ENCODE measurements at regions of chr14 and their contacts with region 1.

Region 1: DNA sequence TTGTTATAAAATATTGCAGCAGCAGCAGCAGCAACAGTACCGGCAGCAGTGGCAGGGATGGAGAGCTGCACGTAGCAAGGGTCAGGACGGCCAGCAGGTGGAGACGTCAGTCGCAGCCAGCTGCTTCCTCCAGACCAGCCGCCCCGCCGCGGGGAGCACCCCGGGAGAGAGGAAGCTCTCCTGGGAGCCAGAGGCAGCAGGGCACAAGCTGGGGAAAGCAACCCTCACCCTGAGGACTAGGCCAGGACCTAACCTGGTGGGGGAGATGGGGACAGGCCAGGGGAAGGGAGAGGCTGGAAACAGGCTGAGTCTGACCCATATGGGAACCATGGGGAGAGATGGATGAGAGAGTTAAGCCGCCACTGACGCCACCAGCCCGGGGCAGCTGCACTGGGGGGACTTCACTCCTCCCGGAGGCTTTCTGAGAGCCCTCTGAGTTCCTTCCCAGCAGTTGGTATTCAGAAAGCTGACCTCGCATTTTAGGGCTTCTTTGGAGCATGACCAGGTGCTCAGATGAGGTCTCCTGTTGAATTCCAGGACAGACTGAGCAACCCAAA is 56.3 kb downstream of the SPTB start:
- DNase-seq: peak; percentile 65
- H3K4me3 Mint-ChIP-seq: no peak overlapping the region
- H3K27ac Mint-ChIP-seq: no peak overlapping the region
- H3K4me1 Mint-ChIP-seq: peaks cover 17% of the 10 kb centered on the region
- H3K27me3 Mint-ChIP-seq: peaks cover 24% of the 10 kb centered on the region
- CTCF ChIP-seq: peak; percentile 68

Region 2: GRCh38 chr14:64800000-64800399 is 23.4 kb before region 1 on chr14:
- CTCF ChIA-PET with region 1: interaction called, 23 read pairs
- POLR2A ChIA-PET with region 1: no interaction called
- intact Hi-C with region 1: no loop called
- DNase-seq: peak; percentile 64
- H3K4me3 Mint-ChIP-seq: no peak overlapping the region
- H3K27ac Mint-ChIP-seq: no peak overlapping the region
- H3K4me1 Mint-ChIP-seq: peaks cover 6% of the 10 kb centered on the region
- H3K27me3 Mint-ChIP-seq: no peaks in the 10 kb centered on the region
- CTCF ChIP-seq: peak; percentile 49

Region 3: DNA sequence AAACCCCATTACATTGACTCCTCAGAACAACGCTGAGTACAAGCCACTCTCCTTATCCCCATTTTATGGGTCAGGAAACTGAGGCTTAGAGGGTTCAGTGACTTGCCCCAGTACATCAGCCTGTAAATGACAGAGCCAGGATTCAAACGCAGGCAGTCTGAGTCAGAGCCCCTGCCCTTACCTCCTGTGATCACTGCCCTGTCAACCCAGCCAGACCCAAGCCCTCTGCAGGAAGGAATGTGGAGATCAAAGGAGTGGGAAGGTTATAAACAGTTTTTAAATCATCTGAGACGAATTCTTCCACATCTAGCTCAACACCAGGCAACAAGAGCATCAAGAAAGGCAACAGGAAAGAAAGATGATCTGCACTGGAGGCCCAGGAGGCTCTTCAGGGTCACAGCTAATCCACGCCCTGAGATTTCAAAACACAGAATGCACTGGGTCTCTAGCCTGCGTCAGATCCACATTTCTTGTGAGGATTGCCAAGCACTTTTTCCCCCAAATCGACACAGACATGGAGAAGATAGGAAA is 17.8 kb after region 1 on chr14:
- CTCF ChIA-PET with region 1: interaction called, 23 read pairs
- POLR2A ChIA-PET with region 1: interaction called, 3 read pairs
- intact Hi-C with region 1: no loop called
- DNase-seq: peak; percentile 65
- H3K4me3 Mint-ChIP-seq: no peak overlapping the region
- H3K27ac Mint-ChIP-seq: no peak overlapping the region
- H3K4me1 Mint-ChIP-seq: peaks cover 10% of the 10 kb centered on the region
- H3K27me3 Mint-ChIP-seq: peaks cover 68% of the 10 kb centered on the region
- CTCF ChIP-seq: peak; percentile 50

Region 4: GRCh38 chr14:64880221-64881121 is 57.1 kb after region 1 on chr14:
- CTCF ChIA-PET with region 1: interaction called, 31 read pairs
- POLR2A ChIA-PET with region 1: no interaction called
- intact Hi-C with region 1: no loop called
- DNase-seq: peak; percentile 12
- H3K4me3 Mint-ChIP-seq: peak overlapping the region; percentile 50
- H3K27ac Mint-ChIP-seq: no peak overlapping the region
- H3K4me1 Mint-ChIP-seq: peaks cover 8% of the 10 kb centered on the region
- H3K27me3 Mint-ChIP-seq: peaks cover 86% of the 10 kb centered on the region
- CTCF ChIP-seq: no peak

Region 5: GRCh38 chr14:64914237-64914971 is 91.0 kb after region 1 on chr14 and contains the start of gene CHURC1:
- CTCF ChIA-PET with region 1: interaction called, 24 read pairs
- POLR2A ChIA-PET with region 1: no interaction called
- intact Hi-C with region 1: no loop called
- DNase-seq: peak; percentile 99
- H3K4me3 Mint-ChIP-seq: peak within 1 kb of the TSS; percentile 85
- H3K27ac Mint-ChIP-seq: peak within 1 kb of the TSS; percentile 98
- H3K4me1 Mint-ChIP-seq: peaks cover 25% of the 10 kb centered on the region
- H3K27me3 Mint-ChIP-seq: no peaks in the 10 kb centered on the region
- CTCF ChIP-seq: no peak
- total RNA-seq, gene CHURC1: 72.5 and 89.2 TPM in 2 replicates